RWPE1 (cell line): ENCODE measurements at regions of chr5 and their contacts with region 1.

Region 1: GRCh38 chr5:14202462-14202861 is 59.3 kb downstream of the TRIO start:
- DNase-seq: no peak
- H3K27ac ChIP-seq: no peak overlapping the region
- CTCF ChIP-seq: no peak

Region 2: GRCh38 chr5:14142827-14143548 is 59.5 kb before region 1 on chr5 and contains the start of gene TRIO:
- CTCF ChIA-PET with region 1: no interaction called
- POLR2A ChIA-PET with region 1: no interaction called
- DNase-seq: peak; percentile 97
- H3K27ac ChIP-seq: peak within 1 kb of the TSS; percentile 90
- CTCF ChIP-seq: peak; percentile 63

Region 3: DNA sequence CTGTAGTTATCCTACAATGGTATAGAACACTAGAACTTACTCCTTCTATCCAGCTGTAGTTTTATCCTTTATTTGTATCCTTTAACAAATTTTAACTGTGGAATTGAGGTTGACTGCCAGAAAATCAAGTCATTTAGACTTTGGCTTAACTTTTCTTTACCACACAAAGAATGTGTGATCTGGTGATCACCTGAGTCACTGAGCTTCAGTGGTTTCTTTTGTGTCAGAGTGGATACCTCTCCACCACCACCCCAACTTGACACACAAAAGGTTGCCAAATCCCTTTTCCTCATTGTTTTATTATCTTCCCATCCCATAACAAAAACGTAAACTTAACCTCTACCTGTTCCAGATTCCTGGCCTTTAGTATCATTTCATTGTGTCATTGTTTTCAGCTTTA is 467.5 kb after region 1 on chr5:
- CTCF ChIA-PET with region 1: interaction called, 11 read pairs
- POLR2A ChIA-PET with region 1: no interaction called
- DNase-seq: peak; percentile 49
- H3K27ac ChIP-seq: no peak overlapping the region
- CTCF ChIP-seq: no peak